ENCODE measurements at regions of chr20 and their contacts with region 1.

Region 1: DNA sequence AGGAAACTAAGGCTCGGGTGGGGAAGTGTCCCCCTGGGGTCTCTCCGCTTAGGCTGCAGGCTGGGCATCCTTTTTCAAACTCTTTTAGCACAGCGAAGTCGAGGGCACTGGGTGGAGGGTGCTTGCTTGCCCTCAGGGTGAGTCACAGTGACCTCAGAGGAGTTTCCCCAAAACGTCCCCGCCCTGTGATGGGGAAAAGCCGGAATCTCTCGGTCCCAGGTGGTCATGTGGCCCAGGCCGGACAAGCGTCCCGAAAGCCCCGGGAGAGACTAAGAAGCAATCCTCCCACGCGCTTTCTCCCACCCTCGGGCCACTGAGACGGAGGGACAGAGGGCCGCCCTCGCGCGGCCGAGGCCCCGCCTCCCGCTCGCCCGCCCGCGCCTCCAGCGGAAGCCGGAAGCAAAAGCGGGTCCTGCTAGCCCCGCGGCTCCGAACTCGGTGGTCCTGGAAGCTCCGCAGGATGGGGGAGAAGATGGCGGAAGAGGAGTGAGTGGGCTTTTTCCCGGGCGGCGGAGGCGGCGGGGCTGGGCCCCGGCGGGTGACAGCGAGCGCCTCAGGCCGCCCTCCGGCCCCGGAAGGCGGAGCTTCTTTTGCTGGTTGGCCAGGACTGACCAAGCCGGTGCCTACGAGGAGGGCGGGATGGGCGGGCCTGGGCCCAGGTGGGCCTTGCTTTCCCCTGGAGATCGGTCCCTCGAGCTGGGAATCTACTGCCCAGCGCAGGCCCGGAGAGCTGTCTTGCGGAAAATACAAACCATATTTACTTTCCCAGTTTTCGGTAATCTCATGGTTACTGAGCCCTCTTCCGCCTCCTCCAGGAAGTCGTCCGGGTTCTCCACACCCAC is at the start of gene SLC9A8:
- DNase-seq: peak; percentile 87 to 92
- ATAC-seq: peak; percentile 93 to 97 (median 96)
- H3K4me3 ChIP-seq: peak within 1 kb of the TSS; percentile 62 to 97 (median 86)
- H3K27ac ChIP-seq: peak within 1 kb of the TSS; percentile 67 to 98 (median 96)
- H3K4me1 ChIP-seq: peaks cover 0 to 36% (median 18%) of the 10 kb centered on the region in 9 donors
- H3K27me3 ChIP-seq: no peaks in the 10 kb centered on the region
- CTCF ChIP-seq: peak in 8 of 9 donors; percentile 32 to 63 (median 47)
- total RNA-seq, gene SLC9A8: 5.5 to 8.7 (median 6.9) TPM

Region 2: DNA sequence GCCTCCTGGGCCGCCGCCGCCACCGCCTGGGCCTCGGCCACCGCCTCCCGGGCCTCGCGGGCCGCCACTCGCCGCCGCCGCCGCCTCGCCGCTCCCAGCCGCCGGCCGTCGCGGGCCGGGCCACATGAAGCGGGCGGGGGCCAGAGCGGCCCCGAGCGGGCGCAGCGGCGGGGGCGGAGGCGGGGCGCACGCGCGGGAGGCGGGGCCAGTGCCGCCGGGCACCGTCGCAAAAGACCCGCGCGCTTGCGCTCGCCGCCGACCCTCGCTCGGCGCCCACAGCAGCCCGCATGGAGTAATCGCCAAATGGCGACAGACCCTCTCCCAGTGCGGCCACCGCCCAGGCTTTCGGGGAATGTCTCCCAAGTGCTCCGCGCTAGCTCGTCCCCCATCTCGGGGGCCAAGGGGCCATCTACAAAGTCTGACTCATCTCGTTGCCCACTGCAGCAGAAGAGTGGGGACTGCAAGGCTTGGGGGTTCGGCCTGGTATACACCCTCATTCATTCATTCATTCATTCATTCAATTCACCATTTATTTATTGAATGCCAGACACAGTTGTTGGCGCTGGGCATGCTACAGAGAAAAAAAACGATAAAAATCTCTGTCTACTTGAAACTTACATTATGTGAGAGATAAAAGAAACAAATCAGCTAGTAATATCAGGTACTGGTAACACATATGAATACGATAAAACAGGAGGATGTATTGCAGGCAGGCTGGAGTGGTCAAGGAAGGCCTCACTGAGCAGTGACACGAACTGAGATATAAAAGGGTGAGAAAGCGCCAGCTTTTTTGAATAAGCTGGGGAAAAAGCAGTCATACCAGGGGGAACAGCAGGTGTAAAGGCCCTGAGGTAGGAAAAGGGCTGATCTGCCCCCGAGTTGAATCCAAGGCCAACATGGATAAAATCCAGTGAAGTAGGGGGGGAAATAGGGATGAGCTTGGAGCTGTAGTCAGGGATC is 98.7 kb before region 1 on chr20 and contains the start of gene B4GALT5:
- intact Hi-C with region 1: loop called in 6 of 10 experiments (anchors 2 to 5 kb)
- DNase-seq: peak; percentile 72 to 76
- ATAC-seq: peak; percentile 82 to 93 (median 89)
- H3K4me3 ChIP-seq: peak within 1 kb of the TSS; percentile 79 to 99 (median 98)
- H3K27ac ChIP-seq: peak within 1 kb of the TSS; percentile 88 to 99 (median 96)
- H3K4me1 ChIP-seq: peaks cover 0 to 55% (median 42%) of the 10 kb centered on the region in 9 donors
- H3K27me3 ChIP-seq: no peaks in the 10 kb centered on the region
- CTCF ChIP-seq: no peak
- total RNA-seq, gene B4GALT5: 24.4 to 61.6 (median 34.3) TPM

Region 3: GRCh38 chr20:49747707-49748524 is 64.8 kb before region 1 on chr20:
- intact Hi-C with region 1: loop called in 1 of 10 experiments (anchors 1 kb)
- DNase-seq: peak; percentile 89 to 93
- ATAC-seq: peak; percentile 92 to 99 (median 98)
- H3K4me3 ChIP-seq: no peak overlapping the region
- H3K27ac ChIP-seq: peak overlapping the region; percentile 55 to 92 (median 84)
- H3K4me1 ChIP-seq: peaks cover 3 to 40% (median 21%) of the 10 kb centered on the region in 9 donors
- H3K27me3 ChIP-seq: no peaks in the 10 kb centered on the region
- CTCF ChIP-seq: no peak

Region 4: GRCh38 chr20:49768204-49769047 is 44.3 kb before region 1 on chr20:
- intact Hi-C with region 1: loop called in 2 of 10 experiments (anchors 1 to 2 kb)
- DNase-seq: peak in 1 of 2 donors; percentile 44
- ATAC-seq: peak; percentile 50 to 80 (median 70)
- H3K4me3 ChIP-seq: peak overlapping the region in 1 of 10 donors; percentile 10
- H3K27ac ChIP-seq: peak overlapping the region; percentile 37 to 86 (median 60)
- H3K4me1 ChIP-seq: peaks cover 0 to 97% (median 42%) of the 10 kb centered on the region in 9 donors
- H3K27me3 ChIP-seq: no peaks in the 10 kb centered on the region
- CTCF ChIP-seq: no peak

Region 5: DNA sequence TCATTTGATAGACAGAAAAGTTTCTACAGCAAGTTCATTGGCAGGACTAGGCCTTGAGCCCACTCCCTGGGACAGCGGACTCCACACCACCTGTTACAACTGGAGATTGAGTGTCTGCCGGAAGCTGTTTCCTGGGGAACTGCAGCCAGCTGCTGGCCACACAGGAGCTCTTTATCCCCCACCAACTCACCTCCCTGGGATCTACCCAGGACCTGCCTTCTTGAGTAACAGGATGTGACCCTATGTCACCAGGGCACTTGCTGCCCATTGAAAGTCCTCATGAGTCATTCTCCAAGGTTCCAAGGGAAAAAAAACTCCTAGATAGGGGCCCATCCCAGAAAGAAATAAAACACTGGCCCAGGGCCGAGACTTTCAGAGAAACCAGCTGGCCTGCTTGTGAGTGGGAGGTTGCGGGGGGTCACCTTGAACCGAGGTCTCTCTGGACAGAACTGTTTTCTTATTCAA is 37.4 kb before region 1 on chr20:
- intact Hi-C with region 1: loop called in 2 of 10 experiments (anchors 1 kb)
- DNase-seq: peak; percentile 21 to 48
- ATAC-seq: peak; percentile 46 to 86 (median 72)
- H3K4me3 ChIP-seq: no peak overlapping the region
- H3K27ac ChIP-seq: peak overlapping the region in 8 of 10 donors; percentile 14 to 84 (median 58)
- H3K4me1 ChIP-seq: peaks cover 11 to 67% (median 28%) of the 10 kb centered on the region in 9 donors
- H3K27me3 ChIP-seq: no peaks in the 10 kb centered on the region
- CTCF ChIP-seq: no peak

Region 6: DNA sequence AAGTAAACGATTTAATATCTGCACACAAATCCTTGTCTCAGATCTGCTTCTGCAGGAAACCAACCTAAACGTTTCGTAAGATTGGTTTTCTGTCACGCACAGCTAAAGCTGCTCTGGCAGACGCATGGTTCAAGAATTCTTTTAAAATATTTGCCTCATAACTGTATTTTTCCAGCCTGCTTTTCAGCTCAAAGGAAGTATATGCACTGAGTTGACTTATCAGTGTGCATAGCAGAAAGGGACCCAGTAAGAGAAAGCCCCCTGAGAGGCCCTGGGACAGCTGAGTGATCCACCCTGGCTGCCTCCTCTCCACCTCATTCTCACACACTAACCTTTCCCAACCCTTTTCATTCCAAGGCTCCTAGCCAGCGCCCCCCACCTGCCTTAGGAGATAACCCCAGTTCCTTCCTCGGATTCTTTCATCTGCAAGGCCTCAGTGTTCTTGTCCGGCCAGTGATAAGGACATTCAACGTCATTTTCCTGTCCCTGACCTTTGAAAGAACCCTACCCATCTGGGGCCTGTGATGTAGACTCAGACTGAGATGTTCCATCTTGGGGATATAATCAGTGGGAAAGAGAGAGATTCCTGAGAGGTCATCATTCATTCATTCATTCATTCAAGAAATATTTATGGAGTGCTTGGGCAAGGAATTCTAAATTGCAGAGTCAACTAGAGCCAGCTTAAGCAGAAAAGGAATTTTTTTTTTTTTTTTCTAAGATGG is 22.4 kb before region 1 on chr20:
- intact Hi-C with region 1: loop called in 1 of 10 experiments (anchors 2 kb)
- DNase-seq: peak; percentile 40 to 57
- ATAC-seq: peak; percentile 75 to 95 (median 86)
- H3K4me3 ChIP-seq: no peak overlapping the region
- H3K27ac ChIP-seq: peak overlapping the region; percentile 8 to 73 (median 66)
- H3K4me1 ChIP-seq: peaks cover 0 to 74% (median 10%) of the 10 kb centered on the region in 9 donors
- H3K27me3 ChIP-seq: no peaks in the 10 kb centered on the region
- CTCF ChIP-seq: peak in 1 of 9 donors; percentile 7